Naive thymus-derived CD4-positive, alpha-beta T cell (primary cell): ENCODE measurements at regions of chr20 and their contacts with region 1.

Region 1: DNA sequence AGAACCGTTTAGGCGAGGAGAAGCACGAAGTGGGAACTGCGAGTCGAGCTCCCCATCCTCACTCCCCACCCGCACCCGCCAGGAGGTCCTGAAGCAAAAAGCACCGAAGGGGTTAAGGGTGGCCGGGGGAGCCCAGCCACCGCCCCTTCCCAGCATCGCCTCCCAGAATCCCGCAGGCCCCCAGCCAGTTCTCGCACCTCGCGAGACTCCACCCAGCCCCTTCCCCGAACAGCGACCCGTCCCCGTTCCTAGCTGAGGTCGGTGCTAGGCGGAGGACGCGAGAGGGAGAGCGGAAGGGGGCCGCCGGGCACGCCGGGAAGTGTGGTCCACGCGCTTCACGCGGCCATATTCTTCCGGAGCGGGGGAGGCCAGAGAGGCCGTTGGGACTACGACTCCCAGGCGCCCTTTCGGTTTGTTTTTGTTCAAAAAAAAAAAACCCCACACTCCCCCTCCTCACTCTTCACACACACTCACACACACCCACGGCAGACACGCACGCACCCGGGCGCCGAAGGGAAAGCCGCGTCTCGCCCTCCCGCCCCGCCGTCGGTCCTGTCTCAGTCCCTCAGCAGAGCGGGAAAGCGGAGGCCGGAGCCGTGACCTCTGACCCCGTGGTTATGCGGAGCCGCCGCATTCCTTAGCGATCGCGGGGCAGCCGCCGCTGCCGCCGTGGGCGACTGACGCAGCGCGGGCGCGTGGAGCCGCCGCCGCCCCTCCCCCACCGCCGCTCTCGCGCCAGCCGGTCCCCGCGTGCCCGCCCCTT is at the start of gene ASXL1:
- DNase-seq: peak; percentile 81 to 96 (median 95)
- ATAC-seq: peak; percentile 94
- H3K4me3 ChIP-seq: peak within 1 kb of the TSS; percentile 95
- H3K4me3 Mint-ChIP-seq: peak within 1 kb of the TSS; percentile 87 to 99 (median 96)
- H3K27ac ChIP-seq: peak within 1 kb of the TSS; percentile 98
- H3K27ac Mint-ChIP-seq: peak within 1 kb of the TSS; percentile 97 to 100 (median 99)
- H3K4me1 ChIP-seq: peaks cover 10 to 27% of the 10 kb centered on the region in 2 donors
- H3K4me1 Mint-ChIP-seq: peaks cover 38 to 65% (median 45%) of the 10 kb centered on the region in 7 donors
- H3K27me3 ChIP-seq: no peaks in the 10 kb centered on the region
- H3K27me3 Mint-ChIP-seq: no peaks in the 10 kb centered on the region
- total RNA-seq, gene ASXL1: 106 to 200 (median 158) TPM

Region 2: DNA sequence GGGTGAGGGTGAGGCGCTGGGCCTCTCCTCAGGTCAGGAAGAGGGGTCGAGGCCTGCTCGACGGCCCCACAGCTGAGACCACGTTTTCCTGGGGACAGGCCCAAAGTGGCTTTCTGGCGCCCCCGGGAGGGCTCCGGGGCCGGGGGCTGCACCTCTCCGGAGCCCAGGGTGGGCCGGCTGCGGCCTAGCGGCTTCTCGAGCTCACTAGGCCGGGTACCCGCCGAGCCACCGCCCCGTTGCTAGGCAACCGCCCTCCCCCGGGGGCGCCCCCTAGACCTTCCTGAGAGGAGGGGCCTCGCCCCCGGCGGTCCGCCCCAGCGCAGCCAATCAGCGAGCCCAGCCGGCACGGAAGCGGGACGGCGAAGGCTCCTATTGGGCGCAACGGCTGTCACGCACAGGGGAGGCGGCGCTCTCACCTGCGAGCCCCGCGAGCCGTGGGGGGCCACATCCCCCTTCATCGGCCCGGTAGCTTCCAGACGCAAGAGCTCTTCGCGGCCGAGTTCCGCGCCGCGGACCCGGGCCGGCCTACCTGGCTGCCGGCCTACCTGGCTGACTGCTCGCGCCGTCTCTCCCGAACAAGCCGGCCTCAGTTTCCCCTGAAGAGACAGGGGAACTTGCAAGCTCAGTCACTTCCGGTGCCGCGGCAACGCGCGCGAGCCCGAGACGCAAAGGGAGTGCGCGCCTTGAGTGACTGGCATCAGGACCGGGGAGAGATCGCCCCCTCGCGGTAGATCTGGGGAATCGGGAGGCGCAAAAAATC is 634.6 kb before region 1 on chr20:
- CTCF ChIA-PET with region 1: no interaction called
- POLR2A ChIA-PET with region 1: no interaction called
- intact Hi-C with region 1: loop called in 1 of 2 experiments (anchors 5 kb)
- DNase-seq: peak; percentile 97 to 99 (median 98)
- ATAC-seq: peak; percentile 95
- H3K4me3 ChIP-seq: peak overlapping the region; percentile 92
- H3K4me3 Mint-ChIP-seq: peak overlapping the region; percentile 89 to 97 (median 96)
- H3K27ac ChIP-seq: peak overlapping the region; percentile 98
- H3K27ac Mint-ChIP-seq: peak overlapping the region; percentile 48 to 97 (median 94)
- H3K4me1 ChIP-seq: peaks cover 14 to 32% of the 10 kb centered on the region in 2 donors
- H3K4me1 Mint-ChIP-seq: peaks cover 27 to 44% (median 38%) of the 10 kb centered on the region in 7 donors
- H3K27me3 ChIP-seq: no peaks in the 10 kb centered on the region
- H3K27me3 Mint-ChIP-seq: no peaks in the 10 kb centered on the region

Region 3: DNA sequence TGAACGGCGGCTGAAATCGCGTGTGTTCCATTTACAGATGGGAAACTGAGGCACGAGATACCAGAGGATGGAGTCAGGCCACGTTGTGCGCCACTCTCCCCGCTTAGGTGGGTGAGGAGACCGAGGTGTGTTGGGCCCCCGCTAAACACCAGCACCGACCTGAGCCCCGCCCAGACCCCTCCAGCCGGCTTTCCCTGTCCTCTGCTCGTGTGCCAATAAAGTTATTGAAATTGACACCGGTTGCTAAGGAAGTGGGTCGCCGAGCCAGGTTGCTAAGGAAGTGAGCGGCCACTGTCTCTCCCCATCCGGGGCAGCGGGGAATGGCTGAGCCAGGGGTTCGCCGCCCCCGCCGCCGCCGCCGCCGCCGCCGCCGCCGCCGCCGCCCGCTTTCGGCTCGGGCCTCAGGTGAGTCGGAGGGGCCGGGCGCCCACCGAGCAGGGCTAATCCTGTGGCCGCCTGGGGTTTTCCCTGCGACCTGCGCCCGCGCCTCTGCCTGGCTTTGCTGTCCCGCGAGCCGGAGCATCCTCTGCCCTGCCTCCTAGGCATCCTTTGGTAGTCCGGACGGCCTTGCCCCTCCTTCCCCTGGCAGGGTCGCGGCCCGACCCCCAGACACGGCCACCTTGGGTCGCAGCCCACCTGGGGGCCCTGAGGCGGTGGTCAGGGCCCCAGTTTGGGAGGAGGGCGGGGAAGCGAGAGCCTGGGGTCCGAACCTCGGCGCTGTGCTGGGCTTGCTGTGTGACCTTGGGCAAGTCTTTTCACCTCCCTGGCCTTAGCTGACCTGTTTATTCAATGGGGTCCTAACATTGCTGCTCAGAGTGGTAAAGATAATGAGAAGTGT is 80.5 kb before region 1 on chr20 and contains the start of gene KIF3B:
- CTCF ChIA-PET with region 1: no interaction called
- POLR2A ChIA-PET with region 1: no interaction called
- intact Hi-C with region 1: loop called (anchors 1 to 5 kb)
- DNase-seq: peak; percentile 62 to 87 (median 85)
- ATAC-seq: peak; percentile 95
- H3K4me3 ChIP-seq: peak within 1 kb of the TSS; percentile 82
- H3K4me3 Mint-ChIP-seq: peak within 1 kb of the TSS; percentile 85 to 93 (median 88)
- H3K27ac ChIP-seq: peak within 1 kb of the TSS; percentile 88
- H3K27ac Mint-ChIP-seq: peak within 1 kb of the TSS; percentile 78 to 97 (median 88)
- H3K4me1 ChIP-seq: peaks cover 9 to 13% of the 10 kb centered on the region in 2 donors
- H3K4me1 Mint-ChIP-seq: peaks cover 24 to 51% (median 39%) of the 10 kb centered on the region in 7 donors
- H3K27me3 ChIP-seq: no peaks in the 10 kb centered on the region
- H3K27me3 Mint-ChIP-seq: no peaks in the 10 kb centered on the region
- total RNA-seq, gene KIF3B: 9.3 to 19.5 (median 11.5) TPM

Region 4: DNA sequence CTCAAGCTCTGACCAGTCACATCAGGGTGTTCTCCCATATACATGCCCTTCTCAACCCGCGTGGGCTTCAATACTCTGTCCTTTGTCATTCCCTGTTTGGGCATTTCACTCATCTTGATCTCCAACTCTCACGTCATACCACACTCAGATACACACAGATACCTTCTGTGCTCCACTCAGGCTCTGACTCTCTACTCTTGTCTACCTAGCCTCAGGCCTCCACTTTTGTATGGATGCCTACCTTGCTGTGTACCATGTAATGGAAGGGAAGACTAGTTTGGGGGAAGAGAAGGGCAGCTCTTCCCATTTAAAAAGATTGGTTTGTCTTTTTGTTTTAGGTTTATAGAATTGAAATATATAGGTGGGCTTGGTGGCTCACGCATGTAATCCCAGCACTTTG is 48.7 kb after region 1 on chr20:
- CTCF ChIA-PET with region 1: no interaction called
- POLR2A ChIA-PET with region 1: interaction called, 17 read pairs
- intact Hi-C with region 1: loop called in 1 of 2 experiments (anchors 1 kb)
- DNase-seq: no peak
- ATAC-seq: no peak
- H3K4me3 ChIP-seq: no peak overlapping the region
- H3K4me3 Mint-ChIP-seq: peak overlapping the region; percentile 10 to 85 (median 76)
- H3K27ac ChIP-seq: peak overlapping the region; percentile 61
- H3K27ac Mint-ChIP-seq: peak overlapping the region; percentile 58 to 95 (median 91)
- H3K4me1 ChIP-seq: peaks cover 17 to 48% of the 10 kb centered on the region in 2 donors
- H3K4me1 Mint-ChIP-seq: peaks cover 36 to 87% (median 71%) of the 10 kb centered on the region in 7 donors
- H3K27me3 ChIP-seq: no peaks in the 10 kb centered on the region
- H3K27me3 Mint-ChIP-seq: no peaks in the 10 kb centered on the region

Region 5: DNA sequence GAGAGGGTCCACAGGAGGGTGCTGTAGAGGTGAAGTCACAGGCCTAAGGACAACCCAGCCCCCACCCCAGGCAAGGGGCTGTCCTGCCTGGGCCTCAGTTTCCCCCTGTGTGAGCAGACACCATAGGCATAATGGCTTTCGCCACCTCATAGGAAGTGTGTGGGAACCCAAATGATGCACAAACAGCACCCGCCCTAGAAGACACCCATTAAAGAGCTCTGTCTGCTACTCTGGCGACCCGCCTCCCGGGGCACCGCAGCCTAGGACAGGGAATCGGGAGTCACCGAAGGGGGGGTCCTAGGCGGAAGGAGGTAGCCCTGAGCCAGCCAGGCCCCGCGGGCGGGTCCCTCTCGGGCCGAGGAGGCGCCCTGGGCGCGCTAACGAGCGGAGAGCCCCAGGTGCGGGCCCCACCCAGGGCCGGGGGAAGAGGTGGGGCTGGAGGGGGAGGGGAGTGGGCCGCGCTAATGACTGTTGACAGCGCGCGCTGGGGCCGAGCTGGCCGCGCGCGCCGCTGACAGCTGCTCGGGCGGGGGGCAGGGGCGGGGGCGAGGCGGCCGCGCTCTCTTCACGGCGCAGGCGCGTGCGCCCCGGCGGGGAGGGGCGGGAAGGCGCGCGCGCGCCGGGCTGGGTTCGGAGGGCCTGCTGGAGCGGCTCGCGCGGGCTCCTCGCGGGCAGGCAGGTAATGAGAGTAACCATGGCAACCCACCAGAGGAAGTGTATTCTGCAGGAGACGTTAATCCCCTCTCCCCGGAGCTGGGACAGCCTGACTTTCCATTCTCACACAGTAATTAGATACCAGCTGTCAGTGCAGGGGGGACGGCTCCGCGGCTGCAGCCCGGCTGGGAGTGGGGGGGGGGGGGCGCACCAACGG is 178.1 kb after region 1 on chr20:
- CTCF ChIA-PET with region 1: no interaction called
- POLR2A ChIA-PET with region 1: interaction called, 7 read pairs
- intact Hi-C with region 1: loop called (anchors 1 to 5 kb)
- DNase-seq: peak; percentile 59 to 91 (median 78)
- ATAC-seq: peak; percentile 77
- H3K4me3 ChIP-seq: peak overlapping the region; percentile 77
- H3K4me3 Mint-ChIP-seq: peak overlapping the region; percentile 82 to 99 (median 88)
- H3K27ac ChIP-seq: peak overlapping the region; percentile 86
- H3K27ac Mint-ChIP-seq: peak overlapping the region; percentile 84 to 98 (median 95)
- H3K4me1 ChIP-seq: peaks cover 73 to 77% of the 10 kb centered on the region in 2 donors
- H3K4me1 Mint-ChIP-seq: peaks cover 61 to 87% (median 84%) of the 10 kb centered on the region in 7 donors
- H3K27me3 ChIP-seq: no peaks in the 10 kb centered on the region
- H3K27me3 Mint-ChIP-seq: no peaks in the 10 kb centered on the region

Region 6: DNA sequence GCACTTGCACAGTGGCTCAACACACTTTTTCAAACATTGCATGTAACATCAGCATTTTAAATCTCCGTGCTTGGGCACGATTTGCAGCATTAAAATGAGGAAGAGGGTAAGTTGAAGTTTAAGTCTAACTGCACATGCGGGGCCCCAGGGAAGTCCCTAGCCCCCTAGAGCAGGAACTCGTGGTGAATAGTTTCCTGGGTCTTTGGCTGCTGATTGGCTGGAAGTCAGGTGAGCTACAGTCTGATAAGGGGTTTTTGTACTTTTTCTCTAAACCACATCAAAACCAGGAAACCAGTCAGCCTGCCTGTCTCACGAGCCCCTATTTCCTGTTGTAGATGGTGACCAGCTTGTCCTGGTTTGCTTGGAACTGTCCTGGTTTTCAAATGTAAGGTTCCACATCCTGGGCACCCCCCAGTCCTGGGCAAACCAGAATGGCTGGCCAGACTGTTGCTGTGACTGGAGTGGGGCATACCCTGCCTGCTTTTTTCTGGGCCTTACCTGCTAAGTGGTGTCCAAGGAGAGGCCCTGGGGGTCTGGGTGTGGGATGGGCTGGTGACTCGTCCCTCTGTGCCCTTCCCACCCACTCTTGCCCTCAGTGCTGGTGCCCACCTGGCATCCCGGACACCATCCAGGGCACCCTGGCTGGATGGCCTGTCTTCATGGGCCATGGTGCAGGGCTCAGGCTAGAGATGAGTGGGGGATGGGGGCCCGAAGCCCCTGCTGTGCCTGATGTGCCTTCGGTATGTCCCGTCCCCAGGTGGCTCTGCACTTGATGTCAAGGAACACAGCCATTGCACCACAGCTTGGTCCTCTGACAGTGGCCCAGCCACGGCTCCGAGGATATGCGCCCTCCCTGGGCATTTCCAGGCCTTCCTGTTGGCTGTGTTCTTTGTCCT is 614.4 kb after region 1 on chr20:
- CTCF ChIA-PET with region 1: no interaction called
- POLR2A ChIA-PET with region 1: no interaction called
- intact Hi-C with region 1: loop called in 1 of 2 experiments (anchors 2 kb)
- DNase-seq: peak; percentile 31 to 96 (median 94)
- ATAC-seq: peak; percentile 90
- H3K4me3 ChIP-seq: peak overlapping the region; percentile 53
- H3K4me3 Mint-ChIP-seq: peak overlapping the region in 1 of 10 donors; percentile 54
- H3K27ac ChIP-seq: peak overlapping the region; percentile 85
- H3K27ac Mint-ChIP-seq: no peak overlapping the region
- H3K4me1 ChIP-seq: peaks cover 73 to 92% of the 10 kb centered on the region in 2 donors
- H3K4me1 Mint-ChIP-seq: peaks cover 13 to 56% (median 46%) of the 10 kb centered on the region in 7 donors
- H3K27me3 ChIP-seq: no peaks in the 10 kb centered on the region
- H3K27me3 Mint-ChIP-seq: no peaks in the 10 kb centered on the region